K562 (cell line): ENCODE measurements at regions of chr20 and their contacts with region 1.

Region 1: GRCh38 chr20:3563548-3564177 is 92.8 kb downstream of the ATRN start:
- DNase-seq: peak; percentile 15 to 50 (median 28)
- ATAC-seq: peak; percentile 73
- H3K4me3 ChIP-seq: no peak overlapping the region
- H3K27ac ChIP-seq: no peak overlapping the region
- H3K4me1 ChIP-seq: no peaks in the 10 kb centered on the region
- H3K27me3 ChIP-seq: no peaks in the 10 kb centered on the region
- CTCF ChIP-seq: peak; percentile 50 to 78 (median 56); a peak in 5 of 6 replicates
- EP300 ChIP-seq: no peak
- POLR2A ChIP-seq: no peak
- RAD21 ChIP-seq: peak; percentile 59 to 75

Region 2: DNA sequence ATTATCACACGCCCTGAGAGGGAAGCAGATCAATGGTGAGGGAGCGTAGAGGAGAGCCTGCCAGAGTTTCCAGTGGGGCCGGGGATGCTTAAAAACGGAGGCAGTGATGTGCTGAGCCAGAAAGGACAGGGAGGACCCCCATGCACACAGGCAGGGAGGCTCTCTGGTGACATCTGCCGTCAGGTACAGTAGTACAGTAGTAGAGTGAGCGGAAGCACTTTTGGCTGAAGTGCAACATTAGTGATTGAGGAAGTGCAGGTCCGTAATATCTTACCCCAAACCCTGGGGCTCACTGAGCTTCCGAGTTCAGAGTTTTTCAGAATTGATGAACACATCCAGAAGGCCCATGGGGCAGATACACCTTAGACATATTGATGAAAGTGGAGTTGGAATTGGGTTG is 57.4 kb after region 1 on chr20:
- CTCF ChIA-PET with region 1: no interaction called
- POLR2A ChIA-PET with region 1: no interaction called
- in situ Hi-C with region 1: no loop called
- intact Hi-C with region 1: loop called (anchors 10 kb)
- DNase-seq: no peak
- ATAC-seq: peak; percentile 48; the same call in 1 of the 3 replicates
- H3K4me3 ChIP-seq: no peak overlapping the region
- H3K27ac ChIP-seq: no peak overlapping the region
- H3K4me1 ChIP-seq: no peaks in the 10 kb centered on the region; a peak in 1 of 5 replicates
- H3K27me3 ChIP-seq: no peaks in the 10 kb centered on the region
- CTCF ChIP-seq: 0 out of 6 replicates have a peak, but pooled peaks of 2 of the 3 experiments have one; percentile 3 to 27
- EP300 ChIP-seq: no peak
- POLR2A ChIP-seq: no peak
- RAD21 ChIP-seq: no peak